BJ (cell line): ENCODE measurements at regions of chrX and their contacts with region 1.

Region 1: GRCh38 chrX:80810365-80810978 is 795 bp upstream of the BRWD3 start:
- DNase-seq: no peak
- H3K4me3 ChIP-seq: peak overlapping the region; percentile 52
- H3K27me3 ChIP-seq: no peaks in the 10 kb centered on the region
- CTCF ChIP-seq: no peak

Region 2: DNA sequence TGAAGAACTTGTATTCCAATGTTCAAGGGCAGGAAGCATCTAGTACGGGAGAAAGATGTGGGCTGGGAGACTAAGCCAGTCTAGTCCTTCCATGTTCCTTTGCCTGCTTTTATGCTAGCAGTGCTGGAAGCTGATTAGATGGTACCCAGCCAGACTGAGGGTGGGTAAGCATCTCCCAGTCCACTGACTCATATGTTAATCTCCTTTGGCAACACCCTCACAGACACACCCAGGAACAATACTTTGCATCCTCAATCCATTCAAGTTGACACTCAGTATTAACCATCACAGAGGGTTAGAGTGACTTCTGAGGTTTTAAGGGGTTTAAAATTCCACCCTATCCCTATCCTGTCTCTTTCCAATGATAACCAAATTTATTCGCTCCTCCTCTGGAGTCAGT is 384.8 kb after region 1 on chrX:
- CTCF ChIA-PET with region 1: no interaction called
- POLR2A ChIA-PET with region 1: interaction called, 14 read pairs
- DNase-seq: no peak
- H3K4me3 ChIP-seq: no peak overlapping the region
- H3K27me3 ChIP-seq: no peaks in the 10 kb centered on the region
- CTCF ChIP-seq: no peak